ENCODE measurements at regions of chr2 and their contacts with region 1.

Region 1: GRCh38 chr2:39033980-39034379 is 86.9 kb downstream of the SOS1 start:
- DNase-seq: peak; percentile 23
- H3K4me3 ChIP-seq: no peak overlapping the region
- H3K27ac ChIP-seq: no peak overlapping the region
- H3K4me1 ChIP-seq: peaks cover 5% of the 10 kb centered on the region
- H3K27me3 ChIP-seq: no peaks in the 10 kb centered on the region
- CTCF ChIP-seq: no peak

Region 2: GRCh38 chr2:38978296-38978903 is 55.6 kb before region 1 on chr2:
- CTCF ChIA-PET with region 1: no interaction called
- dilution Hi-C with region 1: no loop called
- in situ Hi-C with region 1: no loop called
- intact Hi-C with region 1: no loop called
- DNase-seq: no peak
- H3K4me3 ChIP-seq: no peak overlapping the region
- H3K27ac ChIP-seq: no peak overlapping the region
- H3K4me1 ChIP-seq: no peaks in the 10 kb centered on the region
- H3K27me3 ChIP-seq: no peaks in the 10 kb centered on the region
- CTCF ChIP-seq: no peak

Region 3: DNA sequence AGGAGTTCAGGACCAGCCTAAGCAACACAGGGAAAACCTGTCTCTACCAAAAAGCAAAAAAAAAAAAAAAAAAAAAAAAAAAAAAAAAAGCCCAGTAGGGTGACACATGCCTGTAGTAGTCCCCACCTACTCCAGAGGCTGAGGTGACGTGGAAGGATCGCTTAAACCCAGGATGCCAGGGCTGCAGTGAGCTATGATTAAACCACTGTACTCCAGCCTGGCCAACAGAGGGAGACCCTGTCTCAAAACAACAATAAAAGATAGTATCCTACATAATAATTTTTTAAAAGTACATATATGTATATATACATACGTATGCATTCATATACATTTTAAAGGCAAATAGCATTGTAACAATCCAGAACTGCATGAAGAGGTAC is 35.1 kb after region 1 on chr2:
- CTCF ChIA-PET with region 1: interaction called, 13 read pairs
- dilution Hi-C with region 1: no loop called
- in situ Hi-C with region 1: no loop called
- intact Hi-C with region 1: no loop called
- DNase-seq: peak; percentile 57
- H3K4me3 ChIP-seq: no peak overlapping the region
- H3K27ac ChIP-seq: peak overlapping the region; percentile 86
- H3K4me1 ChIP-seq: peaks cover 17% of the 10 kb centered on the region
- H3K27me3 ChIP-seq: no peaks in the 10 kb centered on the region
- CTCF ChIP-seq: peak in 1 of 2 donors; percentile 24

Region 4: DNA sequence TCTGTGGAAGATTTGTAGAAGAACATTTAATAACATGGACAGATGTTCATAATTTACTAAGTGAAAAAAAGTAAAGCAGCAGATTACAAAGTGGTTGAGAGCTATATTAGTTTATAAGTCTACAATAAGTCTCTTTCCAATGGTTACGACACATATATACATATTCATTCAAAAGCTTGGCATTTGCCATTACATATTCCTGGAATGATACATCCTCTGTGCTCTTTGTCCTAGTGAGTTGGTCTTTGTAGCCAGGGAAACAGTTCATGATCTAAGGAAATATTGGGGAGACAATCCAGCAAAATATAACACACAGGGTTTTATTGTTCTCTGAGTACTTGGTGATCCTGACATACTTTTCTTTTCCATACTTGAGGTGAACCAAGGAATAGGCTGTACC is 119.3 kb after region 1 on chr2:
- CTCF ChIA-PET with region 1: interaction called, 13 read pairs
- dilution Hi-C with region 1: no loop called
- in situ Hi-C with region 1: no loop called
- intact Hi-C with region 1: no loop called
- DNase-seq: peak; percentile 9
- H3K4me3 ChIP-seq: no peak overlapping the region
- H3K27ac ChIP-seq: no peak overlapping the region
- H3K4me1 ChIP-seq: no peaks in the 10 kb centered on the region
- H3K27me3 ChIP-seq: no peaks in the 10 kb centered on the region
- CTCF ChIP-seq: no peak

Measured in mammary epithelial cell (primary cell).